Natural killer cell (primary cell): ENCODE measurements at regions of chr9 and their contacts with region 1.

Region 1: GRCh38 chr9:136482793-136483588 is at the start of gene SEC16A:
- DNase-seq: peak; percentile 99
- ATAC-seq: peak; percentile 67 to 87 (median 71)
- H3K4me3 ChIP-seq: peak within 1 kb of the TSS; percentile 67
- H3K4me3 Mint-ChIP-seq: peak within 1 kb of the TSS; percentile 98
- H3K27ac ChIP-seq: peak within 1 kb of the TSS; percentile 100
- H3K27ac Mint-ChIP-seq: peak within 1 kb of the TSS; percentile 95 to 100
- H3K4me1 ChIP-seq: peaks cover 33% of the 10 kb centered on the region
- H3K4me1 Mint-ChIP-seq: peaks cover 22 to 36% of the 10 kb centered on the region in 2 donors
- H3K27me3 ChIP-seq: no peaks in the 10 kb centered on the region
- H3K27me3 Mint-ChIP-seq: peaks cover 0 to 2% of the 10 kb centered on the region in 2 donors
- CTCF ChIP-seq: no peak
- total RNA-seq, gene SEC16A: 84.3 to 89.0 (median 87.1) TPM

Region 2: DNA sequence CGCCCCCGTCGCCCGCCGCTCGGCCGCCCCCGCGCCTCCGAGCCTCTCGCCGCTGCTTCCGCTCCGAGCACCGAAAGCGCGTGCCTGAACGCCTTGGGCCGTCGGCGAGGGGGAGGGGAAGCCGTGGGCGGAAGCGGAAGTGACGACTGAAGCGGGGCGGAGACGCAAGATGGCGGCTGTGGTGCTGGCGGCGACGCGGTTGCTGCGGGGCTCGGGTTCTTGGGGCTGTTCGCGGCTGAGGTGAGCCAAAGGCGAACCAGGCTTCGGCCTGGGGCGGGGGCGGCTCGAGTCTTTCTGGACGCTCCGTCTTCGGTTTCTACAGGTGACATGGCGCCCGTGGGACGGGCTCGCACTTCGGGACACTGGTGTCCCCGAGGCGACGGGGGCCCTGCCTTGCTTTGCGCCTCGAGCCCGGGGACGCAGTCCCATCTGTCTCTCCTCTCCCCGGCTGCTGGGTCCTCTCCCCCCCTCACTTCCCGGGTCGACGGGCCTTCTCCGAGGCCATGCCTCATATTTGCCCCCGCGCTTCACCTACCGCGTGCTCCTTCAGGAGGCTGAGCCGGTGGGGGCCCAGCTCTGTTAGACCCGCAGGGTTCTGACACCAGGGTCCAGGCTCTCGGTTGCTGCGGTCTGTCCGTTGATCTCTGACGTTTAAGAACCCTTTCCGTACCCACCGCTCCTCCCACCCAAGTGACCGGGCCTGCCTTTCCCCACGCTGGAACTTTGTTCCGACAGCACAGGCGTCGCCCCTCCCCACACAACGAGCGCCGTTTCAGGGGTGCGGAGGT is 72.3 kb before region 1 on chr9 and contains the starts of genes ENTR1 and PMPCA:
- intact Hi-C with region 1: no loop called
- DNase-seq: peak; percentile 95 to 97
- ATAC-seq: peak; percentile 92 to 94 (median 93)
- H3K4me3 ChIP-seq: peak within 1 kb of the TSS; percentile 95
- H3K4me3 Mint-ChIP-seq: peak within 1 kb of the TSS; percentile 93
- H3K27ac ChIP-seq: peak within 1 kb of the TSS; percentile 90
- H3K27ac Mint-ChIP-seq: peak within 1 kb of the TSS; percentile 88 to 92
- H3K4me1 ChIP-seq: peaks cover 34% of the 10 kb centered on the region
- H3K4me1 Mint-ChIP-seq: peaks cover 20 to 38% of the 10 kb centered on the region in 2 donors
- H3K27me3 ChIP-seq: no peaks in the 10 kb centered on the region
- H3K27me3 Mint-ChIP-seq: no peaks in the 10 kb centered on the region
- CTCF ChIP-seq: no peak
- total RNA-seq, gene ENTR1: 38.7 to 62.3 (median 41.6) TPM
- total RNA-seq, gene PMPCA: 78.3 to 84.8 (median 79.3) TPM

Region 3: GRCh38 chr9:136493567-136493971 is 10.6 kb after region 1 on chr9:
- intact Hi-C with region 1: no loop called
- DNase-seq: no peak
- ATAC-seq: peak in 1 of 3 donors; percentile 9
- H3K4me3 ChIP-seq: no peak overlapping the region
- H3K4me3 Mint-ChIP-seq: no peak overlapping the region
- H3K27ac ChIP-seq: no peak overlapping the region
- H3K27ac Mint-ChIP-seq: no peak overlapping the region
- H3K4me1 ChIP-seq: peaks cover 4% of the 10 kb centered on the region
- H3K4me1 Mint-ChIP-seq: peaks cover 0 to 4% of the 10 kb centered on the region in 2 donors
- H3K27me3 ChIP-seq: no peaks in the 10 kb centered on the region
- H3K27me3 Mint-ChIP-seq: no peaks in the 10 kb centered on the region
- CTCF ChIP-seq: no peak

Region 4: DNA sequence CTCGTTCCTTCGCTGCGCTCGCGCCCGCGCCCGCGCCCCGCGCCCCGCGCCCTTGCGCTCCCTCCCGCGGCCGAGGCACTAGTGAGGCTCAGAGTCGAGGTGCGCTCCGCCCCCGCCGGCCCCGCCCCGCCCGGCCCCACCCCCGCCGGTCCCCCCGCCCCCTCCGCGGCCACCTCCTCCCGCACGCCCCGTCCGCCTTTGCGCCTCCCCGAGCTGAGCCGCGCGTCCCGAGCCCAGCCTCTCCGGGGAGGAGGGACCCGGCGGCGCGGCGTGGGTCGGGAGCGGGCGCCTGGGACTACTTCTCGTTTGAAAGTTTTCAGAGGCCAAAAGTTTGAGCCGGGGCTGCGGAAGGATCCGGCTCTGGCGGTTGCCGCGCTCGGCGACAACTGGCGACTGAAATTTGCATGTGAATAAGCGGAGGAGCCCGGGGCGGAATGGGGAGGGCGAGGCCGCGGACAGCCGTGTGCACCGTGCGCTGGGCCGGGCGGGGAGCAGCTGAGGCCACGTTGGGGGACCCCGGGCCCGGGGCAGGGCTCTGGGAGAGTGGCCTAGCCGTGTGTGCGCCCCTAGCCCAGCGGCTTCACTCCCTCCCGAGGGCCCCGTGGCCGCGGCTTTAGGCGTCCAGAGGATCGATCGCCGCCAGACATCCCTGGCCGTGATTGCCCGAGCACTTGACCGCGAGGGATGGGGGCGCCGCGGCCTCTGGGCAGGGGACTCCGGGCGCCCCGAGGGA is 63.1 kb after region 1 on chr9 and contains the start of gene NOTCH1:
- intact Hi-C with region 1: loop called (anchors 5 kb)
- DNase-seq: peak; percentile 82 to 90
- ATAC-seq: peak; percentile 77 to 91 (median 80)
- H3K4me3 ChIP-seq: peak within 1 kb of the TSS; percentile 69
- H3K4me3 Mint-ChIP-seq: peak within 1 kb of the TSS; percentile 88
- H3K27ac ChIP-seq: peak within 1 kb of the TSS; percentile 70
- H3K27ac Mint-ChIP-seq: peak within 1 kb of the TSS; percentile 67 to 80
- H3K4me1 ChIP-seq: peaks cover 68% of the 10 kb centered on the region
- H3K4me1 Mint-ChIP-seq: peaks cover 12 to 16% of the 10 kb centered on the region in 2 donors
- H3K27me3 ChIP-seq: no peaks in the 10 kb centered on the region
- H3K27me3 Mint-ChIP-seq: no peaks in the 10 kb centered on the region
- CTCF ChIP-seq: no peak
- total RNA-seq, gene NOTCH1: 126 to 228 (median 192) TPM

Region 5: GRCh38 chr9:136631038-136632000 is 148.3 kb after region 1 on chr9:
- intact Hi-C with region 1: loop called (anchors 1 kb)
- DNase-seq: peak; percentile 66 to 91
- ATAC-seq: peak; percentile 79 to 91 (median 89)
- H3K4me3 ChIP-seq: no peak overlapping the region
- H3K4me3 Mint-ChIP-seq: no peak overlapping the region
- H3K27ac ChIP-seq: peak overlapping the region; percentile 31
- H3K27ac Mint-ChIP-seq: no peak overlapping the region
- H3K4me1 ChIP-seq: peaks cover 58% of the 10 kb centered on the region
- H3K4me1 Mint-ChIP-seq: peaks cover 0 to 7% of the 10 kb centered on the region in 2 donors
- H3K27me3 ChIP-seq: no peaks in the 10 kb centered on the region
- H3K27me3 Mint-ChIP-seq: peaks cover 0 to 5% of the 10 kb centered on the region in 2 donors
- CTCF ChIP-seq: peak; percentile 57

Region 6: GRCh38 chr9:136644598-136645351 is 161.8 kb after region 1 on chr9:
- intact Hi-C with region 1: loop called (anchors 1 kb)
- DNase-seq: peak; percentile 72 to 81
- ATAC-seq: peak; percentile 92 to 98 (median 96)
- H3K4me3 ChIP-seq: no peak overlapping the region
- H3K4me3 Mint-ChIP-seq: no peak overlapping the region
- H3K27ac ChIP-seq: no peak overlapping the region
- H3K27ac Mint-ChIP-seq: no peak overlapping the region
- H3K4me1 ChIP-seq: peaks cover 36% of the 10 kb centered on the region
- H3K4me1 Mint-ChIP-seq: no peaks in the 10 kb centered on the region
- H3K27me3 ChIP-seq: peaks cover 36% of the 10 kb centered on the region
- H3K27me3 Mint-ChIP-seq: peaks cover 15 to 17% of the 10 kb centered on the region in 2 donors
- CTCF ChIP-seq: peak; percentile 90

Region 7: DNA sequence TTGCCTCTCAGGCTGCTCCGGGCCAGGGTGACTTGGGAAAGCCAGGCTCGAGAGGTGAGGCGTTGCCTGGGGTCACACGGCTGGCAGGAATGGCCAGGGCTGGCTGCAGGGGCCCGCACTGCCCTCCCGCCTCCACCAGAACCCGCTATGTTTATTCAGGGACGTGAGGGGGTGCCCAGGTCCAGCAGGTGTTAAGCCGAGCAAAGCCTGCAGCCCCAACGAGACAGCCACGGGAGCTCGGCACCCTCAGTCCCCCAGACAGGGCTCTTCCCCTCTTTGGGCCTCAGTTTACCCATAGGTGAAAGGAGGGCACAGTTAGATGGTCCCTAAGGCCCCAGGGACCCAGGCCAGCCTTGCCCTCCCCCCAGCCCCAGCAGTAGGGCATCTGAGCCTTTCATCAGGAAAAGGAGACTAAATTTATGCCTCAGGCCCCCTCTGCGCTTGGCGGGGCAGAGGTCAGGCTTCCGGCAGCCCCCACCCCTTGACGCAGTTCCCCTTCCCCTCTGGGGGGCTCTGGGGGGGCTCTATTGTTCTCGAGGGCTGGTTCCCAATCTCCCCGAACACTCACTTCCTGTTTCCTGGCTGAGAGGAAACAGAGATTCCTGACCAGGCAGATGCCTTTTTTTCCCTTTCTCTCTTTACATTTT is 172.7 kb after region 1 on chr9:
- intact Hi-C with region 1: no loop called
- DNase-seq: no peak
- ATAC-seq: no peak
- H3K4me3 ChIP-seq: no peak overlapping the region
- H3K4me3 Mint-ChIP-seq: no peak overlapping the region
- H3K27ac ChIP-seq: no peak overlapping the region
- H3K27ac Mint-ChIP-seq: no peak overlapping the region
- H3K4me1 ChIP-seq: peaks cover 37% of the 10 kb centered on the region
- H3K4me1 Mint-ChIP-seq: peaks cover 5% of the 10 kb centered on the region in 2 donors
- H3K27me3 ChIP-seq: peaks cover 46% of the 10 kb centered on the region
- H3K27me3 Mint-ChIP-seq: peaks cover 21 to 31% of the 10 kb centered on the region in 2 donors
- CTCF ChIP-seq: no peak